ENCODE measurements at regions of chr12 and their contacts with region 1.

Region 1: DNA sequence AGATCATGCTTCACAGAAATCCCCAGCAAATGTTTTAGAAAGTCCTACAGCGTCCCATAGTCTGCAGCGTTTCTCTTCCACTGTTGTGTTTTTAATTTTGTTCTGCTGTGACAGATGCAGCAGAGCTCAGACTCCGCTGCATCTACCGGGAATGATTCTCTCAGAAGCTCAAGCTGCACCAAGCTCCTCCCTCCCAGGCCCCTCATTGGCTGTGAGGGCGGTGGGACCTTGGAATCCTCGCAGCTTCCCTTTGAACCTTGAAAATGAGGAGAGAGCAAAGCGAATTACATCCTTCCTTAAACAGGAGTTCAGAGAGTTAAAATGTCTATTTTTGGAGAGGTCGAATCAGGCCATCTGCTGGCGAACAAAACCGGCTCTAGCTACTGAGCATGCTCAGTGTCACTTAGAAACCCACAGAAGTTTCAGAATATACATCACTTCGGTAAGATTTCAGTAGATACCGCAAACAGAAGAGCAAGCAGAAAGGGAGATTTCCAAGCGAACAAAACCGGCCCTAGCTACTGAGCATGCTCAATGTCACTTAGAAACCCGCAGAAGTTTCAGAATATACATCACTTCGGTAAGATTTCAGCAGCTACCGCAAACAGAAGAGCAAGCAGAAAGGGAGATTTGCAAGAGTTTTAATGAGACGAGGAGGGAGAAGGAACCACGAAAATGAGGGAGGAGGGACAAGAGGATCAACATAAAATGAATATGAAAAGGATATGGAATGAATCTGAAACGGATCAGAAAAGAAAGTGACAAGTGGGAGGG is at the start of gene ABCD2:
- DNase-seq: peak; percentile 80 to 88 (median 85)
- H3K4me3 ChIP-seq: peak within 1 kb of the TSS; percentile 83 to 85
- H3K4me3 Mint-ChIP-seq: no peak within 1 kb of the TSS
- H3K27ac ChIP-seq: peak within 1 kb of the TSS; percentile 87
- H3K27ac Mint-ChIP-seq: no peak within 1 kb of the TSS
- H3K4me1 ChIP-seq: peaks cover 42% of the 10 kb centered on the region
- H3K4me1 Mint-ChIP-seq: peaks cover 28 to 46% (median 33%) of the 10 kb centered on the region in 4 donors
- H3K27me3 ChIP-seq: no peaks in the 10 kb centered on the region
- H3K27me3 Mint-ChIP-seq: no peaks in the 10 kb centered on the region
- total RNA-seq, gene ABCD2: 19.0 to 20.1 TPM

Region 2: DNA sequence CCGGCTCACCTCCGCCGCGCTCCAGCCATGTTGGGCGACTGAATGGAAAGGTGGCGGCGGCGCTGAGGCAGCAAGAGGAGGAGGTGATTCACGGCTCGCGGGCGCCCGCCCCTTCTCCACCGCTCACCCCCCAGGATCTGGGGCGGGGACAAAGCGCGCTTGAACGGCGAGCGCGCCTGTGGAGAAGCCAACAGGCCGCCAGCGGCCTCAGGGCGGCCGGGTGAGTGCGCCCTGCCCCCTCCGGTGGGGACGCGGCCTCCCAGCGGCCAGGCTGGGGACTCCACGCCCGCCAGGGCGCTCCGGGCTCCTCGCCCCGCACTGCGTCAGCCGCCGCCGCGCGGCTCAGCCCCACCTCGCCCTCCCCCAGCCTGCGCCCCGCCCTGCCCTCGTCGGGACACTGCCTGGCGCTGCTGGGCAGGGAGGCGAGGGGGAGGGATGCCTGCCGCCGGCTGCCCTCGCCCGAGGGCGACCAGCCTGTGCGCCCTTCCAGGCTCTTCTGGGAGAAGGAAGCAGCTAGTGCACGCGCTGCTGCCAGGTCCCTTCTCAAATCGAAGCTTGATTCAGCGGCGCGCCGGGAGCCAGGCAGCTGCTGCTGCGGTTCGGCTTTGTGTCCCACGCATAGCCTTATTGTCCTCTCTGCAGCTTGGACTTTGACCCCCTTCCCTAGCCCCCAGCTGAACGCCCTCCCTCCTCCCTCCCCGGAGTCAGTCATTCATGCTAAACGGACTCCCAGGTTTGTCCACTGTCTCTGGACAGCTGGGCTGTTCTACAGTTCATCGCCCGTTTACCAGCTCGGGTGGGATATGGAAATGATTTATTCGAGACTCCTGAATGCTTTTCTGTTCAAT is 176.5 kb before region 1 on chr12 and contains the start of gene KIF21A:
- CTCF ChIA-PET with region 1: interaction called, 5 read pairs
- POLR2A ChIA-PET with region 1: interaction called, 31 read pairs
- intact Hi-C with region 1: loop called (anchors 1 kb)
- DNase-seq: peak; percentile 90 to 93 (median 93)
- H3K4me3 ChIP-seq: peak within 1 kb of the TSS; percentile 50 to 83
- H3K4me3 Mint-ChIP-seq: peak within 1 kb of the TSS; percentile 94 to 98 (median 95)
- H3K27ac ChIP-seq: peak within 1 kb of the TSS; percentile 66
- H3K27ac Mint-ChIP-seq: peak within 1 kb of the TSS; percentile 90 to 99 (median 97)
- H3K4me1 ChIP-seq: peaks cover 13% of the 10 kb centered on the region
- H3K4me1 Mint-ChIP-seq: peaks cover 15 to 33% (median 23%) of the 10 kb centered on the region in 4 donors
- H3K27me3 ChIP-seq: no peaks in the 10 kb centered on the region
- H3K27me3 Mint-ChIP-seq: no peaks in the 10 kb centered on the region
- total RNA-seq, gene KIF21A: 19.1 to 19.9 TPM

Region 3: DNA sequence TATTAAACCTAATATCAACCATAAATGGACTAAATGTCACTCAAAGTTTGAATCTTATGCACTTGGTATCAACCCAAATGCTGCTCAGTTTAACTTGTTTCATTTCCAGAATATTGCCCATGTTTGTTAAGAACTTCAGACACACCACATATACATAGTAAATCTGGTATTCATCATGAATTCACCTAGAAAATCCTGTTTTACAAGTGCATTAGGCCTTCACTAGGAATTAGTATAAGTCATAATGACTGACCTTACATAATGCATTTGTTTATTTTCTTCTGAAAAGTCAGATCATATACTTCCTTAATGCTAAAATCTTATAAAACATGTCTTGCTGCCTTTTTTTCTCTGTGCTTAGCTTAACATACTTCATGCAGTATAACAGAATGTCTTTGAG is 66.4 kb before region 1 on chr12:
- CTCF ChIA-PET with region 1: no interaction called
- POLR2A ChIA-PET with region 1: no interaction called
- intact Hi-C with region 1: no loop called
- DNase-seq: no peak
- H3K4me3 ChIP-seq: no peak overlapping the region
- H3K4me3 Mint-ChIP-seq: no peak overlapping the region
- H3K27ac ChIP-seq: no peak overlapping the region
- H3K27ac Mint-ChIP-seq: no peak overlapping the region
- H3K4me1 ChIP-seq: no peaks in the 10 kb centered on the region
- H3K4me1 Mint-ChIP-seq: peaks cover 0 to 1% (median 0%) of the 10 kb centered on the region in 4 donors
- H3K27me3 ChIP-seq: no peaks in the 10 kb centered on the region
- H3K27me3 Mint-ChIP-seq: no peaks in the 10 kb centered on the region

Region 4: DNA sequence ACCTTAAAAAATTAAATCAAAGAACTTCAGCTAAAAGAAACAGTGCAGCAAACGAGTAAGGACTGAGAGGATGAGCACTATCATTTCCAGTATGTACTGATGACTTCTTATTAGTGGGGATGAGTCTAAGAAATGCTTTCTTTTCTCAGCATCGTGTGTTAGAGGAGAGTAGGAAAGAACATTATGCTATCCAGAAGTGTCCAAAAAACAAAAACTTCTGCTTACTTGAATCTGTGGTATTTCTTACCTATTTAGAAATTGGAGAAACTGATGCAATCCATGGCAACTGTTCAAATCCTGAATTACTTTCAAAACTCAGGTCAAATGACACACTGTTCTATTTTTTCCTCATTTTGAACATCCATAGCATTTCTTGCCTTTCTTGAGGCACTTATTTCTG is 23.9 kb before region 1 on chr12:
- CTCF ChIA-PET with region 1: interaction called, 6 read pairs
- POLR2A ChIA-PET with region 1: interaction called, 18 read pairs
- intact Hi-C with region 1: no loop called
- DNase-seq: no peak
- H3K4me3 ChIP-seq: no peak overlapping the region
- H3K4me3 Mint-ChIP-seq: no peak overlapping the region
- H3K27ac ChIP-seq: no peak overlapping the region
- H3K27ac Mint-ChIP-seq: peak overlapping the region in 4 of 7 donors; percentile 48 to 75 (median 60)
- H3K4me1 ChIP-seq: no peaks in the 10 kb centered on the region
- H3K4me1 Mint-ChIP-seq: peaks cover 6 to 15% (median 7%) of the 10 kb centered on the region in 4 donors
- H3K27me3 ChIP-seq: no peaks in the 10 kb centered on the region
- H3K27me3 Mint-ChIP-seq: no peaks in the 10 kb centered on the region

Region 5: DNA sequence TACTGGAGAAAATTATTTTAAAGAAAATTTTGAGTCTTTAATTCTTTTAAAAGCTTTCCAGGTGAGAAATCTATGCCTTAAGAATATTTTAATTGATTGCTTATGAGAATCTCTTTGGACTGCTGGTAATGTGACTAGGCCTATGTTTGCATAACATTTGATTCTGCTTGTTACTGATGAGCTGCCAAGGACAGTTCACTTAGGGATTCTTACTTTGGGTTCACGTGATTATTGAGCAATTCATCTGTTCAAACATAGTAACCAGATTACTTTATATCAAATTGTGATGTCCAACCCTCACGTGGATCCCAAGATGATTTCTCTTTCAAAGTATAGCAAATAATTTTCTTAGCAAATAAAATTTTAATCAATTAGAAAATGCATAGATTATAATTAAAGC is 27.1 kb after region 1 on chr12:
- CTCF ChIA-PET with region 1: no interaction called
- POLR2A ChIA-PET with region 1: interaction called, 7 read pairs
- intact Hi-C with region 1: loop called (anchors 2 kb)
- DNase-seq: no peak
- H3K4me3 ChIP-seq: no peak overlapping the region
- H3K4me3 Mint-ChIP-seq: no peak overlapping the region
- H3K27ac ChIP-seq: no peak overlapping the region
- H3K27ac Mint-ChIP-seq: no peak overlapping the region
- H3K4me1 ChIP-seq: no peaks in the 10 kb centered on the region
- H3K4me1 Mint-ChIP-seq: peaks cover 0 to 6% (median 4%) of the 10 kb centered on the region in 4 donors
- H3K27me3 ChIP-seq: no peaks in the 10 kb centered on the region
- H3K27me3 Mint-ChIP-seq: no peaks in the 10 kb centered on the region

Region 6: DNA sequence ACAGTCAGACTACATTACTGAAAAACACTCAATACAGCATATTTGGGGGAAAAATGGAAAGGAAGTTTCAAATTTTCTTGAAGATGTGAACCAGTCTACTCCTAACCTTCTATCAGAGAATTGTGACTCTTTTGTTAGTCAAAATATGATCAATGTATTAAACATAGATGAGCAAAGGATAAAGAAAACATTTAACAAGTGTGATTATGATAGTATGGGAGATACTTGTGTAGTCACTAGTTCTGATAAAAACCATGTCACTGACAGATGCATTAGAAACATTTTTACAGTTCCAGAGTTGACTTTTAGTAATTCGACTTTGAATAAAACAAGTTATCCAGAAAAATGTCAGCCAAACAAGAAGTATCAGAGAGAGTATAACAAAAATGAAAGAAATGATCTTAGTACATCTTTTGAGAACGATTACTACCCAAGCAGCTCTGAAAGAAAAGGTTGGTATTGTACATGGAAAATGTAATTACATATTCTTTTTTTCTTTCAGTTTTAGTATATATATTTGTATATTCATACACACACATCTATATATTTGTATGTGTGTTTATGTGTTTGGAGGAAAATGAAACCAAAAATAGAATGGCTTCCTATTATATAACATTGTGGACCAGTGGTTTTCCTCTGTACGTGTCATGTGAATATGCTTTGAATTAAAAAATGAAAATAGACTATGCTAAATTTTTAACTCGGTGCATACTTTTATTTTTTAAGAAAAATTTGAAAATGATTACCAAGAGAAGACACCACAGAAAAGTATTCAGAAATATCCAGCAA is 63.0 kb after region 1 on chr12:
- CTCF ChIA-PET with region 1: interaction called, 11 read pairs
- POLR2A ChIA-PET with region 1: interaction called, 77 read pairs
- intact Hi-C with region 1: loop called (anchors 1 kb)
- DNase-seq: peak in 4 of 5 donors; percentile 57 to 73 (median 64)
- H3K4me3 ChIP-seq: peak overlapping the region; percentile 1 to 37
- H3K4me3 Mint-ChIP-seq: peak overlapping the region; percentile 78 to 92 (median 88)
- H3K27ac ChIP-seq: peak overlapping the region; percentile 80
- H3K27ac Mint-ChIP-seq: peak overlapping the region; percentile 86 to 100 (median 98)
- H3K4me1 ChIP-seq: peaks cover 43% of the 10 kb centered on the region
- H3K4me1 Mint-ChIP-seq: peaks cover 30 to 43% (median 37%) of the 10 kb centered on the region in 4 donors
- H3K27me3 ChIP-seq: no peaks in the 10 kb centered on the region
- H3K27me3 Mint-ChIP-seq: no peaks in the 10 kb centered on the region

Region 7: GRCh38 chr12:40107098-40107802 is 487.4 kb after region 1 on chr12:
- CTCF ChIA-PET with region 1: no interaction called
- POLR2A ChIA-PET with region 1: interaction called, 5 read pairs
- intact Hi-C with region 1: loop called (anchors 5 kb)
- DNase-seq: peak; percentile 82 to 84 (median 82)
- H3K4me3 ChIP-seq: peak overlapping the region; percentile 39 to 48
- H3K4me3 Mint-ChIP-seq: peak overlapping the region; percentile 82 to 93 (median 88)
- H3K27ac ChIP-seq: peak overlapping the region; percentile 59
- H3K27ac Mint-ChIP-seq: peak overlapping the region; percentile 53 to 92 (median 74)
- H3K4me1 ChIP-seq: peaks cover 30% of the 10 kb centered on the region
- H3K4me1 Mint-ChIP-seq: peaks cover 19 to 39% (median 29%) of the 10 kb centered on the region in 4 donors
- H3K27me3 ChIP-seq: no peaks in the 10 kb centered on the region
- H3K27me3 Mint-ChIP-seq: peaks cover 3% of the 10 kb centered on the region in 2 donors

Measured in CD4-positive, alpha-beta memory T cell (primary cell).